GM12878 (cell line): ENCODE measurements at regions of chr18 and their contacts with region 1.

Region 1: DNA sequence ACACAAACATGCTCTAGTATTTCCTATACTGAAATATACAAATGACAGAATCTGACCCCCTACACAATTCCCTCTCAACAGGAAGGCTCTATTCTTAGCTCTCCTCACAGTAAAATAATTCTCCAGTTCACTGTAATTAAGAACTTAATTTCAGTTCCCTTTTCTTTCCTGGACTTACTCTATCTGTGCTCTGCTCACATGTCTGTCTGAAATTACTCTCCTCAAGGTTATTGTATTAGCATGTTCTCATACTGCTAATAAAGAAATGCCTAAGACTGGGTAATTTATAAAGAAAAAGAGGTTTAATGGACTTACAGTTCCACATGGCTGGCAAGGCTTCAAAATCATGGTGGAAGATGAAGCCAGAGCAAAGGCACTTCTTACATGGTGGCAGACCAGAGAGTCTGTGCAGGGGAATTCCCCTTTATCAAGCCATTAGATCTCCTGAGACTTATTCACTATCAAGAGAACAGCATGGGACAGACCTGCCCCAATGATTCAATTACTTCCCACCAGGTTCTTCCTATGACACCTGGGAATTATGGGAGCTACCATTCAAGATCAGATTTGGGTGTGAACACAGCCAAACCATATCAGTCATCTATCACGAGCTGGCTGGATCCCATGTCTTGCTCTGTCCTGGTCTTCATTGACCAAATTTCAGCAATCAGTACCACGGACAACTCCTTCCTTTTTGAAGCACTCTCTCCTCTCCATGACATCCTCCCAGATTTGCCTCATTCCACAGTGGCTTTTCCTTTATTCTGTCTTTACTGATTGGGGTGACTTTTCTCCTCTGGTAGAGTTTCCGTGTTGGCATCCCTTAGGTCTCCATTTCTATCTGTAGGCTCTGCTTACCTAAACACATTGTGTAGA is 110.9 kb downstream of the GALR1 start:
- DNase-seq: no peak
- ATAC-seq: no peak; the same call in 2 of the 3 replicates
- H3K4me3 ChIP-seq: no peak overlapping the region
- H3K27ac ChIP-seq: no peak overlapping the region
- H3K4me1 ChIP-seq: no peaks in the 10 kb centered on the region
- H3K27me3 ChIP-seq: no peaks in the 10 kb centered on the region
- CTCF ChIP-seq: no peak
- EP300 ChIP-seq: no peak
- POLR2A ChIP-seq: no peak
- RAD21 ChIP-seq: no peak

Region 2: DNA sequence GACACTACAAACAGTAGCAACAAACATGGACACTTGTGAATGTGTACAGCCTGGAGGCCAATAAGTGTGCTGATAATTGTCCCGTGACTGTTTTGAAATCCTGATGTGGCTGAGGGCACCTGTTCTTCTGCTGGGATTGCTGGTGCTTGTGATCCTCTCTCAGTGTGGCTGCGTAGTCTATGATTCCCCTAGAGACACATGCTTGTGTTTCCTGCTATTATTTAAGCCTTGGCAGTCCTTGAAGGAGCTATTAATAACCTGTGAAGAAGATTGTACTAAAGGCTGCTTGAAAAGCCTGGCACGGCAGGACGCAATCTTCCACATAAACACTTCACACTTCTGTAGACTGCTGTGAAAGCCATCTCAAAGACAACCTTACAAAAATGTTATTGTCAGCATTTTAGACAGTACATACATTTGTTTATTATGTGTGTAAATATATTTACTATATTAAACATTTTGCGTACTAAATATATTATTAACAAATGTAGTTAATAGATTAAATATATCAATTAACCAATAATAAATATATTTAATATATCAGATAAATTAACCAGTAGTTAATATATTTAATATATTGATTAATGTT is 39.5 kb before region 1 on chr18:
- CTCF ChIA-PET with region 1: no interaction called
- POLR2A ChIA-PET with region 1: no interaction called
- RAD21 ChIA-PET with region 1: no interaction called
- SMC1A ChIA-PET with region 1: no interaction called
- in situ Hi-C with region 1: no loop called
- intact Hi-C with region 1: loop called (anchors 2 kb)
- DNase-seq: no peak
- ATAC-seq: no peak
- H3K4me3 ChIP-seq: no peak overlapping the region
- H3K27ac ChIP-seq: no peak overlapping the region
- H3K4me1 ChIP-seq: no peaks in the 10 kb centered on the region
- H3K27me3 ChIP-seq: no peaks in the 10 kb centered on the region
- CTCF ChIP-seq: no peak
- EP300 ChIP-seq: no peak
- POLR2A ChIP-seq: no peak
- RAD21 ChIP-seq: no peak

Region 3: GRCh38 chr18:77346208-77346810 is 14.2 kb before region 1 on chr18:
- CTCF ChIA-PET with region 1: no interaction called
- POLR2A ChIA-PET with region 1: no interaction called
- RAD21 ChIA-PET with region 1: no interaction called
- SMC1A ChIA-PET with region 1: no interaction called
- in situ Hi-C with region 1: no loop called
- intact Hi-C with region 1: no loop called
- DNase-seq: no peak
- ATAC-seq: no peak
- H3K4me3 ChIP-seq: no peak overlapping the region
- H3K27ac ChIP-seq: no peak overlapping the region
- H3K4me1 ChIP-seq: no peaks in the 10 kb centered on the region
- H3K27me3 ChIP-seq: no peaks in the 10 kb centered on the region
- CTCF ChIP-seq: no peak
- EP300 ChIP-seq: no peak
- POLR2A ChIP-seq: no peak
- RAD21 ChIP-seq: no peak

Region 4: DNA sequence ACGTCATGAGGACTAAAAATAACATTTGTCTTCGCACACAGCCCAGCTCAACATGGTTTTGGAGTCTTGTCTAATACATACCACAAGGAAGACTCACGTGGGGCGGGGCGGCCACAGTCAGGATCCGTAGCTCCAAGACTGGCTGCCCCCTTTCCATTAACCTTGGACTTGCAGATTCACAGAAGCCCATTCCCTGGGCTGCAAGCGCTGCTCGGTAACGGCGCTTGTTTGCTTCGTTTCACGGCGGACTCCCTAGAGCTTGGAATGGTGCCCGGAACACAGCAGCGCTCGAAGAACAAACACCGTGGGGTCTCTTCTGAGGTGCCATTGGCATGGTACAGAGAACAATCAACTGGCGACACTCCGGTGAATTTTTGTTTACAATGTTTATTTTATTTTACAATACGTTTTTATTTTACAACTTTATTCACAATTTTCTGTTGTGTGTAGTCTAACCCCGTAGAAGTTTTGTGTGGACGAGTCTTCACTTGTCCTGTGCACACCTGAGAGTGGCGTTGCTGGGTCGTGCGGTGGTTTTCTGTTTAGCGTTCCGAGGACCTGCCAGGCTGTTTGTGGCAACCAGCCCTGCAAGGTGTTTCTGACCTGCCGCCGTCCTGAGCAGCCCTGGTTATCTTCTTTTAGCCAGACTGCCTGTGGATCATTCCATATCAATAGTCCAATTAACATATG is 15.6 kb after region 1 on chr18:
- CTCF ChIA-PET with region 1: no interaction called
- POLR2A ChIA-PET with region 1: no interaction called
- RAD21 ChIA-PET with region 1: no interaction called
- SMC1A ChIA-PET with region 1: no interaction called
- in situ Hi-C with region 1: no loop called
- intact Hi-C with region 1: no loop called
- DNase-seq: no peak
- ATAC-seq: no peak
- H3K4me3 ChIP-seq: no peak overlapping the region
- H3K27ac ChIP-seq: no peak overlapping the region
- H3K4me1 ChIP-seq: no peaks in the 10 kb centered on the region
- H3K27me3 ChIP-seq: no peaks in the 10 kb centered on the region; a peak in 1 of 4 replicates
- CTCF ChIP-seq: no peak
- EP300 ChIP-seq: no peak
- POLR2A ChIP-seq: no peak
- RAD21 ChIP-seq: no peak

Region 5: GRCh38 chr18:77512152-77512551 is 151.6 kb after region 1 on chr18:
- CTCF ChIA-PET with region 1: no interaction called
- POLR2A ChIA-PET with region 1: no interaction called
- RAD21 ChIA-PET with region 1: no interaction called
- SMC1A ChIA-PET with region 1: no interaction called
- in situ Hi-C with region 1: no loop called
- intact Hi-C with region 1: no loop called
- DNase-seq: no peak
- ATAC-seq: no peak
- H3K4me3 ChIP-seq: no peak overlapping the region
- H3K27ac ChIP-seq: no peak overlapping the region
- H3K4me1 ChIP-seq: no peaks in the 10 kb centered on the region
- H3K27me3 ChIP-seq: no peaks in the 10 kb centered on the region
- CTCF ChIP-seq: no peak
- EP300 ChIP-seq: no peak
- POLR2A ChIP-seq: no peak
- RAD21 ChIP-seq: no peak